Activated T-helper 1 cell treated with anti-CD3 and anti-CD28 coated beads, Interleukin-12 subunit alpha, Interleukin-12 subunit beta, Interleukin-2, Interleukin-4 antibody, amounts not matched to agents 30 ng/mL and 10 ng/mL and 1 ng/mL, durations not matched to agents 14 hours and 24 hours and 36 hours (primary cell): ENCODE measurements at regions of chr3 and their contacts with region 1.

Region 1: GRCh38 chr3:127953091-127954035 is 38.3 kb downstream of the KBTBD12 start:
- DNase-seq: no peak
- H3K4me3 Mint-ChIP-seq: no peak overlapping the region
- H3K27ac Mint-ChIP-seq: no peak overlapping the region
- H3K4me1 Mint-ChIP-seq: no peaks in the 10 kb centered on the region
- H3K27me3 Mint-ChIP-seq: peaks cover 29% of the 10 kb centered on the region

Region 2: DNA sequence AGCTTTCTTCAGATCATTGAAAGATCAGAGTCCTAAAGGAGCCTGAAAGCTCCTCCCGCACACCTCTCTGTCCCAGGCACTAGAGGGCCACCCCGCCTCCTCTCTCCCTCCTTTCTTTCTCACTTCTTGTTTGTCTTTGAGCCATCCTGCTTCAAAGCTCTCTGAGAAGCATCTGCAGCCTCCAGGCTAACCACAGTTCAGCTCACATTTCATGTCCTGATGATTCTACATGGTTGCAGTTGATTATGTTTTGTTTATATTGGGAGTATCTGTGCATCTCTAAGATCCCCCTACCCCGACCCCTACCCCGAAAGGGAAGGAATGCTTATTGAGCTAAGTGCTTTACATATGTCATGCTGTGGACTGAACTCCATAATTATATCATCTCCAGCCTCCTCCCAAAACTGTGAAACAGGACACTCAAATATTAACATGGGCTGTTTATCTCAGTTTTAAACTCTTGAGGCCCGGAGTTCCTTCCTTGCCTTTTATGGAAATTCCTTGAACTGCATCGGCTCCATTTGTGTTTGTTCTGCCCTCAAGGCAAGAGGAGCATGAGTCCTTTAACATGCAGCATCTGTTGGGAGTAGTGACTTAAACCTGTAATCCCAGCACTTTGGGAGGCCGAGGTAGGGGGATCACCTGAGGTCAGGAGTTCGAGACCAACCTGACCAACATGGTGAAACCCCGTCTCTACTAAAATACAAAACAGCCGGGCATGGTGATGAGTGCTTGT is 162.0 kb before region 1 on chr3:
- intact Hi-C with region 1: no loop called
- DNase-seq: no peak
- H3K4me3 Mint-ChIP-seq: no peak overlapping the region
- H3K27ac Mint-ChIP-seq: no peak overlapping the region
- H3K4me1 Mint-ChIP-seq: no peaks in the 10 kb centered on the region
- H3K27me3 Mint-ChIP-seq: peaks cover 4% of the 10 kb centered on the region

Region 3: GRCh38 chr3:127857333-127857732 is 96.0 kb before region 1 on chr3:
- intact Hi-C with region 1: loop called (anchors 5 kb)
- DNase-seq: no peak
- H3K4me3 Mint-ChIP-seq: no peak overlapping the region
- H3K27ac Mint-ChIP-seq: no peak overlapping the region
- H3K4me1 Mint-ChIP-seq: no peaks in the 10 kb centered on the region
- H3K27me3 Mint-ChIP-seq: peaks cover 5% of the 10 kb centered on the region